ENCODE measurements at regions of chr5 and their contacts with region 1.

Region 1: GRCh38 chr5:163408311-163408923 is 29.0 kb upstream of the CCNG1 start:
- DNase-seq: peak; percentile 81
- H3K4me3 Mint-ChIP-seq: no peak overlapping the region
- H3K27ac Mint-ChIP-seq: no peak overlapping the region
- H3K4me1 Mint-ChIP-seq: peaks cover 5% of the 10 kb centered on the region
- H3K27me3 Mint-ChIP-seq: peaks cover 17% of the 10 kb centered on the region
- CTCF ChIP-seq: peak; percentile 93

Region 2: GRCh38 chr5:161544350-161544765 is 1864.1 kb before region 1 on chr5:
- CTCF ChIA-PET with region 1: interaction called, 13 read pairs
- POLR2A ChIA-PET with region 1: no interaction called
- intact Hi-C with region 1: loop called (anchors 10 kb)
- DNase-seq: peak; percentile 72
- H3K4me3 Mint-ChIP-seq: no peak overlapping the region
- H3K27ac Mint-ChIP-seq: no peak overlapping the region
- H3K4me1 Mint-ChIP-seq: peaks cover 11% of the 10 kb centered on the region
- H3K27me3 Mint-ChIP-seq: peaks cover 93% of the 10 kb centered on the region
- CTCF ChIP-seq: peak; percentile 97

Region 3: DNA sequence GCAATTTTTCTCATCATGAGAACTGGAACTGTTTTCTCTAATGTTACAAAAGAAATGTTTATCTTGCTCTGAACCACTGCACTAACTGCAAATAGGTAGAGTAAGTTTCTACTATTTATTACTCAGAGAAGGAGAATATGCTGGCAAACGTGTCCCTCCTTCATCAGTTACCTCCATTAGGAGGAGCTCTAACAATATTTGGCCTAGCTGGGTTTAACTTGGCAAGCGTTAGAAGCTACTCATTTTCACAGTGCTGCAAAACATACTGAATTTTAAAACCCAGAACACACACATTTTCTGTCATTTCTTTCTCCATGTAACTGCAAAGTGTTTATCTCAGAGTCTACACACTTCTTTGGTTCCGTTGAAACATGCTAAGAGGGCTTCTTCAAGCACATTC is 1441.9 kb before region 1 on chr5:
- CTCF ChIA-PET with region 1: interaction called, 4 read pairs
- POLR2A ChIA-PET with region 1: no interaction called
- intact Hi-C with region 1: loop called (anchors 2 kb)
- DNase-seq: peak; percentile 60
- H3K4me3 Mint-ChIP-seq: no peak overlapping the region
- H3K27ac Mint-ChIP-seq: no peak overlapping the region
- H3K4me1 Mint-ChIP-seq: no peaks in the 10 kb centered on the region
- H3K27me3 Mint-ChIP-seq: peaks cover 76% of the 10 kb centered on the region
- CTCF ChIP-seq: peak; percentile 69

Region 4: DNA sequence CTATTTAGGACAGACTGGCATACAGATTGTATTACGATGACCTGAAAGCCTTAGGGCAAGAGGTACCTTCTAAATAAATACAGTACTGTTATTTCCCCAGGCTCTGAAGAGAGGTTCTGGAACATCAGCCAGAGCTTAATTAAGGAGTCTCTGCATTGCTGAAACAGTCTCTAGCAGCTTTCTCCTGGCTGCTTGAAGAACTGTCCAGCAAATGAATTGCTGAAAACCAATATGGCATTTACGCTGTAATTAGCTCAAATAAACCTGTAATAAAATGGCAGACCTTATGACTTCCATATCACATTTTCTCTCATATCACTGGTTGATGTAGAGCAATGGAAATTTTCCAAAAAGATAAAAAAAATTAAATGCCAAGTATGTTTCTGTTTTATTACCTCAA is 704.5 kb before region 1 on chr5:
- CTCF ChIA-PET with region 1: interaction called, 26 read pairs
- POLR2A ChIA-PET with region 1: no interaction called
- intact Hi-C with region 1: loop called (anchors 5 kb)
- DNase-seq: peak; percentile 32
- H3K4me3 Mint-ChIP-seq: no peak overlapping the region
- H3K27ac Mint-ChIP-seq: no peak overlapping the region
- H3K4me1 Mint-ChIP-seq: peaks cover 5% of the 10 kb centered on the region
- H3K27me3 Mint-ChIP-seq: peaks cover 36% of the 10 kb centered on the region
- CTCF ChIP-seq: no peak

Region 5: GRCh38 chr5:163347671-163348070 is 60.7 kb before region 1 on chr5:
- CTCF ChIA-PET with region 1: interaction called, 48 read pairs
- POLR2A ChIA-PET with region 1: interaction called, 3 read pairs
- intact Hi-C with region 1: loop called (anchors 1 kb)
- DNase-seq: peak; percentile 88
- H3K4me3 Mint-ChIP-seq: no peak overlapping the region
- H3K27ac Mint-ChIP-seq: no peak overlapping the region
- H3K4me1 Mint-ChIP-seq: no peaks in the 10 kb centered on the region
- H3K27me3 Mint-ChIP-seq: peaks cover 26% of the 10 kb centered on the region
- CTCF ChIP-seq: peak; percentile 92

Region 6: GRCh38 chr5:163397354-163397753 is 11.1 kb before region 1 on chr5:
- CTCF ChIA-PET with region 1: interaction called, 20 read pairs
- POLR2A ChIA-PET with region 1: interaction called, 5 read pairs
- intact Hi-C with region 1: no loop called
- DNase-seq: no peak
- H3K4me3 Mint-ChIP-seq: no peak overlapping the region
- H3K27ac Mint-ChIP-seq: no peak overlapping the region
- H3K4me1 Mint-ChIP-seq: no peaks in the 10 kb centered on the region
- H3K27me3 Mint-ChIP-seq: peaks cover 22% of the 10 kb centered on the region
- CTCF ChIP-seq: no peak

Measured in MCF 10A (cell line).